ENCODE measurements at regions of chr6 and their contacts with region 1.

Region 1: GRCh38 chr6:32622545-32623401 is 14.4 kb upstream of the HLA-DQA1 start:
- DNase-seq: peak; percentile 72
- ATAC-seq: peak; percentile 85
- H3K4me3 Mint-ChIP-seq: peak overlapping the region; percentile 8
- H3K27ac Mint-ChIP-seq: peak overlapping the region; percentile 91
- H3K4me1 Mint-ChIP-seq: peaks cover 43% of the 10 kb centered on the region
- H3K27me3 Mint-ChIP-seq: no peaks in the 10 kb centered on the region
- CTCF ChIP-seq: peak; percentile 46

Region 2: DNA sequence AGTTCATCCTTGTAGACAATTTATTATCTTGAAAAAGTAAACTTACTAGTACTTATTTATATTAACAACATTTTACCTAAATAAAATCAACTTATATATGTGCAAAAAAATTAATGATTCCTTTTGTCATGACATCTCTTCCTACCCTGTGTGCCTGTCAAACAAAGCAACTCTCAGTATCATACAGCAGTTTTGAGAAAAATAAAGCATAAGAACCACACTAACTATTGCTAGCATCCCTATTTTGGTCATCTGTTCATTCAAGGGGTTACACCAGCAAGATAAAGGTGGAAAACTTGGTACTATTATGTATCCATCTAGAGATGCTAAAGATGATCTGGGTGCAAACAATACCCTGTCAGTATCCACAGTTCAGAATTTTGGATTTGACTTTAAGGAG is 25.7 kb before region 1 on chr6:
- CTCF ChIA-PET with region 1: no interaction called
- POLR2A ChIA-PET with region 1: no interaction called
- intact Hi-C with region 1: no loop called
- DNase-seq: no peak
- ATAC-seq: no peak
- H3K4me3 Mint-ChIP-seq: no peak overlapping the region
- H3K27ac Mint-ChIP-seq: no peak overlapping the region
- H3K4me1 Mint-ChIP-seq: no peaks in the 10 kb centered on the region
- H3K27me3 Mint-ChIP-seq: no peaks in the 10 kb centered on the region
- CTCF ChIP-seq: no peak

Region 3: GRCh38 chr6:32609731-32610640 is 12.8 kb before region 1 on chr6:
- CTCF ChIA-PET with region 1: interaction called, 10 read pairs
- POLR2A ChIA-PET with region 1: interaction called, 4 read pairs
- intact Hi-C with region 1: no loop called
- DNase-seq: peak; percentile 66
- ATAC-seq: peak; percentile 98
- H3K4me3 Mint-ChIP-seq: no peak overlapping the region
- H3K27ac Mint-ChIP-seq: no peak overlapping the region
- H3K4me1 Mint-ChIP-seq: peaks cover 12% of the 10 kb centered on the region
- H3K27me3 Mint-ChIP-seq: peaks cover 3% of the 10 kb centered on the region
- CTCF ChIP-seq: no peak

Region 4: GRCh38 chr6:32685603-32686002 is 62.8 kb after region 1 on chr6:
- CTCF ChIA-PET with region 1: interaction called, 3 read pairs
- POLR2A ChIA-PET with region 1: no interaction called
- intact Hi-C with region 1: loop called (anchors 5 kb)
- DNase-seq: peak; percentile 34
- ATAC-seq: peak; percentile 94
- H3K4me3 Mint-ChIP-seq: peak overlapping the region; percentile 26
- H3K27ac Mint-ChIP-seq: peak overlapping the region; percentile 36
- H3K4me1 Mint-ChIP-seq: peaks cover 26% of the 10 kb centered on the region
- H3K27me3 Mint-ChIP-seq: peaks cover 3% of the 10 kb centered on the region
- CTCF ChIP-seq: no peak

Region 5: DNA sequence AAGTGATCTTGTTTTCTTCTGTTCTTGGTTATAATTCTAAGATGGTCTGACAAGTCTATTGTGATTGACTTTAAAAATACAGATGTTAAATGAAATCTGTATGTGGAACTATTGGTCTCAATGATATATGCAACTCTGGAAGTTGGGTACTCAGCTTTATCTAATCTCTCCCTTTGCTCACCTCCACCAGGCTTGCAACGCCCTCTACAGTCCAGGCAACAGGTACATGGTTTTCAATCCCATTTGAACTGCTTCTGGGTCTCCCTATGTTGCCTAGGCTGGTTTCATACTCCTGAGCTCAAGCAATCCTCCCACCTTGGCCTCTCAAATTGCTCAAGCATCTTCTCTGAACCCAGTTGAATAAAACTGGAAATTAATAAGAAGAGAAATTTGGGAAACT is 69.2 kb after region 1 on chr6:
- CTCF ChIA-PET with region 1: interaction called, 18 read pairs
- POLR2A ChIA-PET with region 1: no interaction called
- intact Hi-C with region 1: loop called (anchors 5 kb)
- DNase-seq: peak; percentile 63
- ATAC-seq: peak; percentile 68
- H3K4me3 Mint-ChIP-seq: no peak overlapping the region
- H3K27ac Mint-ChIP-seq: no peak overlapping the region
- H3K4me1 Mint-ChIP-seq: peaks cover 7% of the 10 kb centered on the region
- H3K27me3 Mint-ChIP-seq: peaks cover 28% of the 10 kb centered on the region
- CTCF ChIP-seq: peak; percentile 55

Region 6: GRCh38 chr6:32876603-32877002 is 253.8 kb after region 1 on chr6:
- CTCF ChIA-PET with region 1: no interaction called
- POLR2A ChIA-PET with region 1: no interaction called
- intact Hi-C with region 1: no loop called
- DNase-seq: no peak
- ATAC-seq: no peak
- H3K4me3 Mint-ChIP-seq: no peak overlapping the region
- H3K27ac Mint-ChIP-seq: no peak overlapping the region
- H3K4me1 Mint-ChIP-seq: no peaks in the 10 kb centered on the region
- H3K27me3 Mint-ChIP-seq: peaks cover 2% of the 10 kb centered on the region
- CTCF ChIP-seq: no peak

Measured in activated CD8-positive, alpha-beta T cell treated with anti-CD3 and anti-CD28 coated beads for 36 hours (primary cell).